PC-9 (cell line): ENCODE measurements at regions of chr5 and their contacts with region 1.

Region 1: DNA sequence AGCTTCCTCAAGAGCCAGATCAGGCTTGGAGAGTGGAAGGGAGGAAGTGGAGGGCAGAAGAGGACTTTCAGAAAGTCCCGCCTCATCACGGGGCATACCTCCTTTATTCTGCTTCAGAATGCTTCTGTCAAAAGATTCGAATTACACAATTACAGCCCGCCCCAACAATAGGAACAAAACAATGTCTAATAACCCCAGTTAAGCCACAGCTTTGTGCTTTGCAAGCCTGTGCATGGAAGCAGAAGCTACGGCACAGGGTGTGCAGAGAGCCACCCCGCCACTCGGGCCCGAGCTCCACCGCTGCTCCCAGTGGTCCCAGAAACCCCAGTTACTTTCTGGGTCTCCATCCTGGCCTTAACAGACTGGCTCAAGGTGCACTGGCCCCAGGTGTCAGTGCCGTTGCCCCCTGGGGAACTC is 23.5 kb downstream of the HNRNPH1 start:
- DNase-seq: no peak
- H3K4me3 ChIP-seq: no peak overlapping the region
- H3K27ac ChIP-seq: no peak overlapping the region
- H3K4me1 ChIP-seq: no peaks in the 10 kb centered on the region
- H3K27me3 ChIP-seq: no peaks in the 10 kb centered on the region
- CTCF ChIP-seq: no peak

Region 2: GRCh38 chr5:179450961-179451827 is 148.8 kb before region 1 on chr5:
- CTCF ChIA-PET with region 1: no interaction called
- POLR2A ChIA-PET with region 1: no interaction called
- intact Hi-C with region 1: no loop called
- DNase-seq: no peak
- H3K4me3 ChIP-seq: no peak overlapping the region
- H3K27ac ChIP-seq: no peak overlapping the region
- H3K4me1 ChIP-seq: no peaks in the 10 kb centered on the region
- H3K27me3 ChIP-seq: peaks cover 58% of the 10 kb centered on the region
- CTCF ChIP-seq: no peak

Region 3: DNA sequence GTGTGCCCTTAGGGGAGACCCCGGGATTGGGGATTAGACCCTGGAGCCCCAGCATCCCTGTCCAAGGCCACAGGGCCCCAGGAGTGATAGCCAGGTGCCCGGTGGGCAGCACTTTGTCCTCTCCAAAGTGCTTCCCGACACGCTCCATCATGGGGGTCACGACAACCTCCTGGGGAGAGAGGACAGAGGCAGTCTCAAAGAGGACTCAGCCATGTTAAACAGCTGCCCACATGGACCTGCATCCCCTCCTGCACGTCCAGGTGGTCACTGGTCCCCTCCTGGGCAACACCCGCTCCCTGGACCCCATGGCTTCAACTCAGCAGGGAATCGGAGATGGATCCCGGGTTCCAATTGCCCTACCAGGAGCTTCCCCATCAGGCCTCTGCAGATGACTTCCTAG is 43.6 kb after region 1 on chr5:
- CTCF ChIA-PET with region 1: no interaction called
- POLR2A ChIA-PET with region 1: no interaction called
- intact Hi-C with region 1: no loop called
- DNase-seq: no peak
- H3K4me3 ChIP-seq: no peak overlapping the region
- H3K27ac ChIP-seq: no peak overlapping the region
- H3K4me1 ChIP-seq: no peaks in the 10 kb centered on the region
- H3K27me3 ChIP-seq: peaks cover 21% of the 10 kb centered on the region
- CTCF ChIP-seq: no peak

Region 4: DNA sequence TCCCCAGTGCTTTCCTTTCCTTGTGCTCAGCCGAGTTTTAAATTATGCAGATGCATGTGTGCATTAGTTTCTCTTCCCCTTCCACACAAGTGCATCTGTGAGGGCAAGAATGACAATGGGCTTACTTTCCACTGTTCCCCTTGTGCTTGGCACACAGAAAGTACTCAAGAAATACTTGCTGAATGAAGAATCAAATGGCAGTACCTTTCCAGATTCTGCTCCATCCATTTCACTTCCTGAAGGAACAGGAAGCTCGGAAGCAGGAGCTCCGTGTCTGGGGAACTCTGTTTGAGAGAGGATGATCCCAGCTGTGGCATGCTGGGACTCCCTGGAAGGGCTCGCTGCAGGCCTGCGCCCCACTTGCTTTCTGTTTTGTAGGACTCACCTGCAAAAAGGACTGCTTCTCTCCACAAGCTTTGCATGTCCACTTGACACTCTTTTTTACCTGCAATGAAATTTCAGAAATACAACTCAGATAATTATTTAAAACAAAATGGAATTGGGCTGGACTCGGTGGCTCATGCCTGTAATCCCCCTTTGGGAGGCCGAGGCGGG is 253.1 kb after region 1 on chr5:
- CTCF ChIA-PET with region 1: interaction called, 10 read pairs
- POLR2A ChIA-PET with region 1: no interaction called
- intact Hi-C with region 1: no loop called
- DNase-seq: no peak
- H3K4me3 ChIP-seq: no peak overlapping the region
- H3K27ac ChIP-seq: no peak overlapping the region
- H3K4me1 ChIP-seq: no peaks in the 10 kb centered on the region; the same call in 1 of the 2 replicates
- H3K27me3 ChIP-seq: no peaks in the 10 kb centered on the region
- CTCF ChIP-seq: no peak